ENCODE measurements at regions of chrX and their contacts with region 1.

Region 1: DNA sequence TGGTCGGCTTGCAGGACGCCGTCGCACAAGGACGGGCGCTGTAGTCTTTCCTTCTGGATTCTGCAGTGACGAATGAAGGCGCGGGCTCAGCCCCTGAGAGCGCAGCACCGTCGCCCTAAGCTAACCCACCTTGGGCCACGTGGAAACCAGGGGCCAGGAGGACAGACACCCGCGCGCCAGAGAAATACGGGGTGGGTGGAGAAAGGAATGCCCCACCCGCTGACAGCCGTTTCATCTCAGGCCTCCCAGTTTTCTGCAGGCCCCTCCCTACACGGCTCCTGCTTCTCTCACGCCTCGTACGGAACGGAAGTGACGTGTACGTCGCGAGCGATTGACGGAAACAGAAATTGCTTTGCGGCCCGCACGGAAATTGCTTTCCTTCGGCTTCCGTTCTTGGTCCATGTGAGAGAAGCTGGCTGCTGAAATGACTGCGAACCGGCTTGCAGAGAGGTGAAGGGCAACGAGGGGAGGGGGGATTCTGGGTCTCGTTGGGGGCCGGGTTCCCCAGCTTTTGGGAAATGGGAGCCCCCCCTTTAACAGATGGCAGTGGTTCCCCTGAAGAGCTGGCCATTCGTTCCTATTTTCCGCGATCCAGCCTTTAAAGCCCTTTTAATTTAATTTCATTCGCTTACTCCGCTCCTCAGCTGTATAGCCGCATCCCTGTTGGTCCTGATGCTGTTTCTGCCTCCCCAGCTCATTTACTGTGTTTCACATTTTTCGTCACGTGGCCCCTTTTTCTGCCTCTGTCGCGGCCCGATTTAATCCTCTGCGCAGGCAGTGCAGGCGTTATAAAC is at the start of gene UTP14A:
- DNase-seq: peak; percentile 53 to 94 (median 83)
- ATAC-seq: peak; percentile 93
- H3K4me3 ChIP-seq: peak within 1 kb of the TSS; percentile 78 to 82
- H3K4me3 Mint-ChIP-seq: peak within 1 kb of the TSS; percentile 90
- H3K27ac ChIP-seq: peak within 1 kb of the TSS; percentile 68 to 70
- H3K27ac Mint-ChIP-seq: peak within 1 kb of the TSS; percentile 88
- H3K4me1 ChIP-seq: peaks cover 5% of the 10 kb centered on the region
- H3K4me1 Mint-ChIP-seq: peaks cover 7% of the 10 kb centered on the region
- H3K27me3 ChIP-seq: no peaks in the 10 kb centered on the region
- H3K27me3 Mint-ChIP-seq: no peaks in the 10 kb centered on the region
- CTCF ChIP-seq: no peak
- total RNA-seq, gene UTP14A: 10.1 to 10.3 TPM

Region 2: GRCh38 chrX:129600981-129601424 is 305.0 kb before region 1 on chrX:
- CTCF ChIA-PET with region 1: interaction called, 4 read pairs
- POLR2A ChIA-PET with region 1: no interaction called
- intact Hi-C with region 1: loop called (anchors 5 kb)
- DNase-seq: peak in 4 of 9 experiments; percentile 4 to 54 (median 28)
- ATAC-seq: no peak
- H3K4me3 ChIP-seq: no peak overlapping the region
- H3K4me3 Mint-ChIP-seq: no peak overlapping the region
- H3K27ac ChIP-seq: no peak overlapping the region
- H3K27ac Mint-ChIP-seq: no peak overlapping the region
- H3K4me1 ChIP-seq: peaks cover 11% of the 10 kb centered on the region
- H3K4me1 Mint-ChIP-seq: peaks cover 21% of the 10 kb centered on the region
- H3K27me3 ChIP-seq: no peaks in the 10 kb centered on the region
- H3K27me3 Mint-ChIP-seq: no peaks in the 10 kb centered on the region
- CTCF ChIP-seq: peak; percentile 35

Region 3: GRCh38 chrX:129606918-129607317 is 299.1 kb before region 1 on chrX:
- CTCF ChIA-PET with region 1: no interaction called
- POLR2A ChIA-PET with region 1: no interaction called
- intact Hi-C with region 1: loop called (anchors 5 kb)
- DNase-seq: peak; percentile 9 to 72 (median 60)
- ATAC-seq: peak; percentile 63
- H3K4me3 ChIP-seq: no peak overlapping the region
- H3K4me3 Mint-ChIP-seq: no peak overlapping the region
- H3K27ac ChIP-seq: no peak overlapping the region
- H3K27ac Mint-ChIP-seq: no peak overlapping the region
- H3K4me1 ChIP-seq: peaks cover 15% of the 10 kb centered on the region
- H3K4me1 Mint-ChIP-seq: peaks cover 19% of the 10 kb centered on the region
- H3K27me3 ChIP-seq: no peaks in the 10 kb centered on the region
- H3K27me3 Mint-ChIP-seq: no peaks in the 10 kb centered on the region
- CTCF ChIP-seq: peak; percentile 54

Region 4: DNA sequence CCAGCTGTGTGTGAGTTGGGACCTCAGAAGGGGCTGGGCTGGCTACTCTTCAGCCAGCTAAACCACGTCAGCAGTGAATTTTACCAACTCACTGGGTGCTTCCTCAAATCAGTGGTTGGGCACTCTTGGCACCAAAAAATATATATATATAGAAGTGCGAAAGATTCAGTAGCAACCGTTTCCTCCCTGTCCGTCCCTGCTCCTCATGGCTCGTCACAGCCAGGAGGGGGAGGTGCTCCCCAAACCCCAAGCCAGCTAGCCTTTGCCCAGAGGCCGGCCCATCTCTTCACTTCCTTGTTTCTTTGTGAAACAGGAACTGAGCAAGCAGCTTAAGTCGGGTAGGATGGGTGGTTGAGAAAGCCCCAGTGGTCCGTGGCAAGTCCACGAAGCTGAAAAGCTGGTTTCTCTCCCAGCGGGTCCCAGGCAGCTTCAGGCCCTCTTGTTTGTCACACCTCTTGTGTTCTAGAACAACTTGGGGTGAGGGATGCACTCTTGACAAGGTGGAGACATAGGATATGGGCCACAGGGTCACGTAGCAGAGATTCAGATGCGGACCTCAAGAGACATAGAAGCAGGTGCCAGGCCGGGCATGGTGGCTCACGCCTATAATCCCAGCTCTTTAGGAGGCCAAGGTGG is 133.1 kb before region 1 on chrX:
- CTCF ChIA-PET with region 1: no interaction called
- POLR2A ChIA-PET with region 1: no interaction called
- intact Hi-C with region 1: loop called in 1 of 2 experiments (anchors 5 kb)
- DNase-seq: peak in 5 of 9 experiments; percentile 39 to 83 (median 54)
- ATAC-seq: no peak
- H3K4me3 ChIP-seq: no peak overlapping the region
- H3K4me3 Mint-ChIP-seq: peak overlapping the region; percentile 54
- H3K27ac ChIP-seq: peak overlapping the region in 1 of 2 experiments; percentile 75
- H3K27ac Mint-ChIP-seq: peak overlapping the region; percentile 95
- H3K4me1 ChIP-seq: peaks cover 85% of the 10 kb centered on the region
- H3K4me1 Mint-ChIP-seq: peaks cover 77% of the 10 kb centered on the region
- H3K27me3 ChIP-seq: no peaks in the 10 kb centered on the region
- H3K27me3 Mint-ChIP-seq: no peaks in the 10 kb centered on the region
- CTCF ChIP-seq: no peak

Region 5: GRCh38 chrX:129843459-129844306 is 62.3 kb before region 1 on chrX and contains the start of gene ZDHHC9:
- CTCF ChIA-PET with region 1: no interaction called
- POLR2A ChIA-PET with region 1: no interaction called
- intact Hi-C with region 1: loop called (anchors 1 to 5 kb)
- DNase-seq: peak; percentile 70 to 91 (median 81)
- ATAC-seq: peak; percentile 96
- H3K4me3 ChIP-seq: peak within 1 kb of the TSS; percentile 67 to 73
- H3K4me3 Mint-ChIP-seq: peak within 1 kb of the TSS; percentile 86
- H3K27ac ChIP-seq: peak within 1 kb of the TSS; percentile 36 to 60
- H3K27ac Mint-ChIP-seq: peak within 1 kb of the TSS; percentile 64
- H3K4me1 ChIP-seq: peaks cover 24% of the 10 kb centered on the region
- H3K4me1 Mint-ChIP-seq: peaks cover 32% of the 10 kb centered on the region
- H3K27me3 ChIP-seq: no peaks in the 10 kb centered on the region
- H3K27me3 Mint-ChIP-seq: no peaks in the 10 kb centered on the region
- CTCF ChIP-seq: no peak
- total RNA-seq, gene ZDHHC9: 2.4 to 2.6 TPM

Region 6: GRCh38 chrX:130339408-130340222 is 433.6 kb after region 1 on chrX and contains the start of gene SLC25A14:
- CTCF ChIA-PET with region 1: no interaction called
- POLR2A ChIA-PET with region 1: no interaction called
- intact Hi-C with region 1: loop called in 1 of 2 experiments (anchors 5 kb)
- DNase-seq: peak; percentile 32 to 86 (median 71)
- ATAC-seq: peak; percentile 88
- H3K4me3 ChIP-seq: peak within 1 kb of the TSS; percentile 60 to 83
- H3K4me3 Mint-ChIP-seq: peak within 1 kb of the TSS; percentile 95
- H3K27ac ChIP-seq: peak within 1 kb of the TSS; percentile 36 to 83
- H3K27ac Mint-ChIP-seq: peak within 1 kb of the TSS; percentile 83
- H3K4me1 ChIP-seq: no peaks in the 10 kb centered on the region
- H3K4me1 Mint-ChIP-seq: peaks cover 20% of the 10 kb centered on the region
- H3K27me3 ChIP-seq: no peaks in the 10 kb centered on the region
- H3K27me3 Mint-ChIP-seq: no peaks in the 10 kb centered on the region
- CTCF ChIP-seq: no peak
- total RNA-seq, gene SLC25A14: 11.9 to 13.4 TPM